OCI-LY7 (cell line): ENCODE measurements at regions of chr1 and their contacts with region 1.

Region 1: DNA sequence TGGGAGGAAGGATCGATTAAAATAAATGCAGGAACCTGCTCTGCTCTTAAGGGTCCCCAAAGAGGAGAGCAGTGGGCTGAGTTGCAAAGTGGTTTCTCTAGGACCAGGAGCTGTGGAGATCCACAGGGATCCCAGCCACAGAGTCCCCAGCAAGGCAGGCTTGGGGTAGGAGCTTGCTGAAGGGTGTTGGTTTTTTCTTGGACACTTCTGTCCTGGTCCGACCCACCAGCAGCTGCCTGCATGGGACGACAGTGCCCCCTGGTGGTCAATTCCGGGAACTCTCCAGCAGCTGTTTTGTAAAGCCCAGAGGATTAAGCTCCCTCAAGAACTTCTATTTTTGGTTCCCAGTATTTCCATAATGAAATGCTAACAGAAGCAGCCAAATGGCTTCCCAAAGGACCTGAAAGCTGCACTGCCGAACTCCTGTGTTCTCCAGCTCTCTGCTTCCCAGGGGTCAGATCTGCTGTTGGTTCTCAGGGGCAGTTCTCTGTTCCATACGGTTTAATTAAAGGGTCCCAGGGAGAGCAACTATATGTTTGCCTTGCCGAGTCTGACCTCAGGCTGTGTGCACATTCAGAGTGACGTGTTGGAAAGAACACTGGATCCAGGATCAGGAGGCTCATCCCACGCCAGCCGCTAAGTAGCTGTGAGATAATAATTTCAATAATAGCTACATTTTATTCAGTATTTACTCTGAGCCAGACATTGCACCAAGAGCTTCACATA is 23.2 kb downstream of the NENF start:
- DNase-seq: peak; percentile 77
- H3K4me3 ChIP-seq: no peak overlapping the region
- H3K27ac ChIP-seq: no peak overlapping the region
- H3K4me1 ChIP-seq: peaks cover 6% of the 10 kb centered on the region
- CTCF ChIP-seq: peak; percentile 99

Region 2: GRCh38 chr1:212012034-212012740 is 443.8 kb before region 1 on chr1:
- CTCF ChIA-PET with region 1: no interaction called
- POLR2A ChIA-PET with region 1: no interaction called
- intact Hi-C with region 1: loop called (anchors 5 kb)
- DNase-seq: peak; percentile 74
- H3K4me3 ChIP-seq: no peak overlapping the region
- H3K27ac ChIP-seq: no peak overlapping the region
- H3K4me1 ChIP-seq: no peaks in the 10 kb centered on the region
- CTCF ChIP-seq: peak; percentile 94

Region 3: GRCh38 chr1:212186427-212187207 is 269.3 kb before region 1 on chr1:
- CTCF ChIA-PET with region 1: no interaction called
- POLR2A ChIA-PET with region 1: no interaction called
- intact Hi-C with region 1: loop called (anchors 5 kb)
- DNase-seq: peak; percentile 76
- H3K4me3 ChIP-seq: peak overlapping the region; percentile 36
- H3K27ac ChIP-seq: no peak overlapping the region
- H3K4me1 ChIP-seq: peaks cover 12% of the 10 kb centered on the region
- CTCF ChIP-seq: no peak

Region 4: DNA sequence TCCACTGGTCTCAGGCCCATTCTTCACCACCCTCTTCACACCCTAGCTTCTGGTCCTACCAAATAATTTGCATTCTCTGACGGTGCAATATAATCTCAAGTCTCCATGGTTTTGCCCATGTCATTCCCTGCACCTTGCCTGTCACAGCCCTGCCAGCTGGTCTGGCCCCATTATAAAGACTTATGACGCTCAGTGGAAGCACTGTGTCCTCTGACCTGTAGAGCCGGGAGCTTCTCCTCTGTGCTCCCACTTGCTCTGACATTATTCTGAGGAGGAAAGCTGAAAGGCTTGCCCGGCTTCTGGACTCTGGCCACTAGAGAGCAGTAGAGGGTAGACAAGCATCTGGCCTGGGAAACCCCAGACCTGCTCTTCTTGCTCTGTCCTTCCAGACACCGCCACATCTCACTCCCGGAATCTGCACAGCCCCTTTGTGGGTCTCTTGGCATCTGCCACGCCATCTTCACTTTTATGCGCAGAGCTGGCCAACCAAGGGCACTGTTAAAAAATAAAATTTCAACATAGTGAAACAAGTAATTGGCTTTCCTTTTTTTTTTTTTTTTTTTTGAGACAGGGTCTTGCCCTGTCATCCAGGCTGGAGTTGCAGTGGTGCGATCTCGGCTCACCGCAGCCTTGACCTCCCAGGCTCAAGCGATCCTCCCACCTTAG is 21.2 kb after region 1 on chr1:
- CTCF ChIA-PET with region 1: interaction called, 10 read pairs
- POLR2A ChIA-PET with region 1: no interaction called
- intact Hi-C with region 1: no loop called
- DNase-seq: peak; percentile 85
- H3K4me3 ChIP-seq: no peak overlapping the region
- H3K27ac ChIP-seq: no peak overlapping the region
- H3K4me1 ChIP-seq: no peaks in the 10 kb centered on the region
- CTCF ChIP-seq: peak; percentile 93